ENCODE measurements at regions of chr5 and their contacts with region 1.

Region 1: DNA sequence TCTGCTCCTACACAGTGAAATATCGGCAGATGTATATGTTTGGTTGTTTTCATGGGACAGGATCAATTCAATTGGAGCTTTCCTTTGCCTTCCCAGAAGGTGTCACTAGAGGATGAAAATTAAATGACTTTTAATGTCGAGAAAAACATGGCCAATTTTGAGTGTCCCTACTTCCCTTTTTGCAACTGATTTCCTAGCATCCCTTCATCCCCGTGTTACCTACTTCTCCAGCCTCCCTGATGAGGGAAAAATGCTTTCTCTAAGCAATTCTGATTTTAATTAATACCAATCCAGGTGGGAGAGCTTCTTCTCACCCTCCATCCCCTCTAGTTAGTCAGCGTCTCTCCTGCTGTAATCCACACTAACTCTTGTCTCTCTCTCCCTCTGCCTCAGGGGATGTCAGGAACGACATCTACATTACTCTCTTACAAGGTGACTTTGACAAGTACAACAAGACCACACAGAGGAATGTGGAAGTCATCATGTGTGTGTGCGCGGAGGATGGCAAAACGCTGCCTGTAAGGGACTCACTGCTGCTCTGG is 64.9 kb downstream of the DOCK2 start:
- DNase-seq: peak; percentile 65
- ATAC-seq: peak; percentile 40
- H3K4me3 ChIP-seq: no peak overlapping the region
- H3K27ac ChIP-seq: no peak overlapping the region
- H3K4me1 ChIP-seq: peaks cover 19% of the 10 kb centered on the region
- H3K27me3 ChIP-seq: no peaks in the 10 kb centered on the region
- CTCF ChIP-seq: peak; percentile 73

Region 2: GRCh38 chr5:168947212-168947868 is 754.6 kb before region 1 on chr5:
- CTCF ChIA-PET with region 1: no interaction called
- POLR2A ChIA-PET with region 1: no interaction called
- intact Hi-C with region 1: loop called (anchors 5 kb)
- DNase-seq: peak; percentile 67
- ATAC-seq: peak; percentile 82
- H3K4me3 ChIP-seq: no peak overlapping the region
- H3K27ac ChIP-seq: no peak overlapping the region
- H3K4me1 ChIP-seq: no peaks in the 10 kb centered on the region
- H3K27me3 ChIP-seq: peaks cover 14% of the 10 kb centered on the region
- CTCF ChIP-seq: peak; percentile 87

Region 3: DNA sequence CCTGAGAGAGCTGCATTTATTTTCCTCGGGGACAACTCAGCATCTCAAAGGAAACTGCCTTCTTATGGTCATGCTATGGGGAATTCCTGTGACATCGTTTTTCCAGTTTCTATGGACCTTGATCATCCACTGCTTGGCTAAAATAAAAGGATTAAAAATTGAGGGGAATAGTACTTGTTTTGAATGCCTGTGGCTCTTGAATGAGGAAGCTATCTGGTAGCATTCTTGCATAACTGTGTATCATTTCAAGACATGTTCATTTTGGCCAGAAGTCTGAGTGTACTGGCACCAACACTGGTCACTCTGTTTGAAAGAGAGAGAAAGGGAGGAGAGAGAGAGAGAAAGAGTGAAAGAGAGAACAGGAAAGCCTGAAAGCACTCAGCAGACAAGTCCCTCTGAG is 51.8 kb after region 1 on chr5:
- CTCF ChIA-PET with region 1: no interaction called
- POLR2A ChIA-PET with region 1: no interaction called
- intact Hi-C with region 1: no loop called
- DNase-seq: no peak
- ATAC-seq: no peak
- H3K4me3 ChIP-seq: no peak overlapping the region
- H3K27ac ChIP-seq: no peak overlapping the region
- H3K4me1 ChIP-seq: no peaks in the 10 kb centered on the region
- H3K27me3 ChIP-seq: no peaks in the 10 kb centered on the region
- CTCF ChIP-seq: no peak

Region 4: GRCh38 chr5:169914766-169915165 is 212.8 kb after region 1 on chr5:
- CTCF ChIA-PET with region 1: no interaction called
- POLR2A ChIA-PET with region 1: no interaction called
- intact Hi-C with region 1: loop called (anchors 5 kb)
- DNase-seq: no peak
- ATAC-seq: no peak
- H3K4me3 ChIP-seq: no peak overlapping the region
- H3K27ac ChIP-seq: no peak overlapping the region
- H3K4me1 ChIP-seq: peaks cover 4% of the 10 kb centered on the region; the same call in 1 of the 2 replicates
- H3K27me3 ChIP-seq: no peaks in the 10 kb centered on the region
- CTCF ChIP-seq: no peak

Region 5: DNA sequence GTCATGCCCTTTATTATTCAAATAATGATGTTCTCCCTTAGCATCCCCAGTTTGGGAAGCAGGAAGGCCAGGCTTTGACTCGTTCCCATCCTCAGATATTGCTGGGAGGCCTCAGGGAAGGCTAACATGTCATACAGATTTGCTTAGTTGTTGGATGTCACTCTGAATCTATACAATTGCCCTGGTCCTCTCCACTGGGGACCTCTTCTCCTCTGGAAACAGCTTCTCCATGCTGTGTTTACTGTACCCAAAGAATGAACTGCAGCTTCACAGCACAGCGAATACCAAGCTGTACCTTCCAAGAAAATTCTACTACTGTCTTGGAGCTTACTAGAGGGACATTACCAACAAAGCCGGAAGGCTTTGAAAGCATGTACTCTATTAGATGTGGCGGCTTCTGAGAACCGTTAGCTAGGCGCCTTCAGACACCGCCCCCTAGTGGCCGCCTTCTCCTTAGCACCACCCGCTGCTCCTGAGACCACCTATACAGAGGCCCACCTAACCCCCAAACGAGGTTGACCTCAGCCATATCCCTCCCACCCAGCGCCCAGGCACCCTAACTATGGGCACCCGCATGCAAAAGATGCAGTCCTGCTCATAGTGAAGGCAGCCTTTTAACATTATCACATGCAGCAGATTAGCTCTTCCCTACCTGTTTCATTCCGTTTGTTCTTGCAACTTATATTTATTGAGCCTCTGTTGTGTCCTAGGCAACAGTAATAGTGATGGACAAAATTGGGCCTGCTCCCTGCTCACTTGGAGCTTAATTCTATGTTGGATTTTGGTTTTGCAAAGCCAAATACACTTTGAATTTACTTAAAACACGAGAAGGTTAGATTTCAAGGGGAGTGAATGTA is 368.8 kb after region 1 on chr5:
- CTCF ChIA-PET with region 1: interaction called, 6 read pairs
- POLR2A ChIA-PET with region 1: no interaction called
- intact Hi-C with region 1: loop called (anchors 2 kb)
- DNase-seq: peak; percentile 30
- ATAC-seq: peak; percentile 75
- H3K4me3 ChIP-seq: no peak overlapping the region
- H3K27ac ChIP-seq: no peak overlapping the region
- H3K4me1 ChIP-seq: no peaks in the 10 kb centered on the region
- H3K27me3 ChIP-seq: no peaks in the 10 kb centered on the region
- CTCF ChIP-seq: peak; percentile 78

Region 6: DNA sequence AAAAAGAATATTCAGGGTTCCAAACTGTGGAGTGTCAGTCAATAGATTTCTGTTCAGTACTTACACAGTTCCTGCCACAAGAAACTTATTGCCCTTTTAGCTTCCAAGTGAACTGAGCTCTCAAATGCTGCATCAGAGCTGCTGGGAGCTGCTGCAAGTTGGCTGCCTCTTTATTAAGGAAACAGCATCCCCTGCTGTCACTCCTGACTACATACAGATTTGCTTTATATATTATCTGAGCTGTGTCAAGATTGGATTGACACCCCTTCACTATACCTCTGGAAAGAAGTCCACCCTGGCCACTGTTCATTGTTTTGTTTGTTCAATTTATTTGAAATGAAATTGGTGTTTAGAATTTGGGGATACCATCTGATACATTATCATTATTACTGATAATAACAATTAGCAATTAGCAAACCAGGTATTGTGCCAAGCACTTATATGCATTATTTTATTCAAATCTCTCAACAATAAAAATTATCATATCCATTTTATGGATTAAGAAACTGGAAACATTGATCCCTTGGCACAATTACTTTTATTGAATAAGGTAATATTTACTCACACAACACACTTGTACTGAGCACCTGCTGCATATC is 514.4 kb after region 1 on chr5:
- CTCF ChIA-PET with region 1: interaction called, 4 read pairs
- POLR2A ChIA-PET with region 1: no interaction called
- intact Hi-C with region 1: loop called (anchors 1 kb)
- DNase-seq: peak; percentile 70
- ATAC-seq: peak; percentile 28
- H3K4me3 ChIP-seq: no peak overlapping the region
- H3K27ac ChIP-seq: no peak overlapping the region
- H3K4me1 ChIP-seq: peaks cover 39% of the 10 kb centered on the region
- H3K27me3 ChIP-seq: no peaks in the 10 kb centered on the region
- CTCF ChIP-seq: peak; percentile 80

Measured in PC-3 (cell line).